Body of pancreas (tissue), 4 donors: ENCODE measurements at regions of chr6 and their contacts with region 1.

Region 1: GRCh38 chr6:125114248-125114858 is 39.2 kb upstream of the TPD52L1 start:
- DNase-seq: peak; percentile 58 to 79 (median 67)
- ATAC-seq: no peak
- H3K4me3 ChIP-seq: no peak overlapping the region
- H3K27ac ChIP-seq: no peak overlapping the region
- H3K4me1 ChIP-seq: no peaks in the 10 kb centered on the region
- H3K27me3 ChIP-seq: no peaks in the 10 kb centered on the region
- CTCF ChIP-seq: peak; percentile 30 to 91 (median 82)
- POLR2A ChIP-seq: no peak

Region 2: DNA sequence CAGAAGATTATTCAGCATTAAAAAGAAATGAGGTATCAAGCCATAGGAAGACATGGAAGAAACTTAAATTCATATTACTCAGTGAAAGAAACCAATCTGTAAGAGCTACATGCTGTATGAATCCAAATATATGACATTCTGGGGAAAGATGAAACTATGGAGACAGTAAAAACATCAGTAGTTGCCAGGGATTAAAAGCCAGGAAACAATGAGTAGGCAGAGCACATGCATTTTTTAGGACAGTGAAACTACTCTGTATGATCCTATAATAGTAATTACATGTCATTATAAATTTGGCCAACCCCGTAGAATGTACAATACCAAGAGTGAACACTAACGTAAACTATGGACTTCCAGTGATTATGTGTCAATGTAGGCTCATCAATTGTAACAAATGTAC is 244.9 kb before region 1 on chr6:
- intact Hi-C with region 1: loop called (anchors 5 kb)
- DNase-seq: no peak
- ATAC-seq: no peak
- H3K4me3 ChIP-seq: no peak overlapping the region
- H3K27ac ChIP-seq: no peak overlapping the region
- H3K4me1 ChIP-seq: no peaks in the 10 kb centered on the region
- H3K27me3 ChIP-seq: no peaks in the 10 kb centered on the region
- CTCF ChIP-seq: no peak
- POLR2A ChIP-seq: no peak